Thyroid gland (tissue), 4 donors: ENCODE measurements at regions of chr1 and their contacts with region 1.

Region 1: DNA sequence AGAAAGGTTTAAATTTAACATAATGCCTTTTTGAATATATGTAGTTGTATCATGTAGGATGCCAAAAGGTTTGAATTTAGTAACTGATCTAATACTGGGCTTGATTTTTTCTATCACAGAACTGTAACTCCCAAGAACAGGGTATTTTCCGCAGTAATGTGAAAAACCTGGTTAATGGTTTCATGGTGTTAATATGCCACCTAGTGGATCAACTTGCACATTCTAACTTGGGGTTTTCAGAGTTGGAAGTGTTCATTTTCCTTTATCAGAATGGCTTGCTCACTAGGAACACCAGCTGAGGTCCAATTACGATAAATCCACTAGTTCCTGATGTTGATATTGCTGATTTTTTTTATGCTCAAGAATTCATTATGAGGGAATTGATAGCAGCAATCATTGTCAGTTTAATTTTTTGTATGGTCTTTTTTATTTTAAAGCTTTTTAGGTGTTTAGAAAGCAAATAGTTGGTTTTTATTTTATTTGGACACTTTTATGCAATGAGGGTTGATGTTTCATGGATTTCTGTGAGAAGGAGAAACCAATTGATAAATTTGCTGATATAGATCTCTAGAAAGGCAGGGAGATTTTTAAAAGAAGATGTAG is 157.2 kb downstream of the PLA2G4A start:
- DNase-seq: no peak
- H3K4me3 ChIP-seq: no peak overlapping the region
- H3K27ac ChIP-seq: no peak overlapping the region
- H3K4me1 ChIP-seq: no peaks in the 10 kb centered on the region
- H3K27me3 ChIP-seq: no peaks in the 10 kb centered on the region
- CTCF ChIP-seq: peak in 5 of 6 experiments; percentile 26 to 76 (median 61)
- POLR2A ChIP-seq: no peak

Region 2: GRCh38 chr1:186487163-186487562 is 498.8 kb before region 1 on chr1:
- intact Hi-C with region 1: loop called (anchors 5 kb)
- DNase-seq: no peak
- H3K4me3 ChIP-seq: no peak overlapping the region
- H3K27ac ChIP-seq: no peak overlapping the region
- H3K4me1 ChIP-seq: no peaks in the 10 kb centered on the region
- H3K27me3 ChIP-seq: no peaks in the 10 kb centered on the region
- CTCF ChIP-seq: no peak
- POLR2A ChIP-seq: no peak

Region 3: DNA sequence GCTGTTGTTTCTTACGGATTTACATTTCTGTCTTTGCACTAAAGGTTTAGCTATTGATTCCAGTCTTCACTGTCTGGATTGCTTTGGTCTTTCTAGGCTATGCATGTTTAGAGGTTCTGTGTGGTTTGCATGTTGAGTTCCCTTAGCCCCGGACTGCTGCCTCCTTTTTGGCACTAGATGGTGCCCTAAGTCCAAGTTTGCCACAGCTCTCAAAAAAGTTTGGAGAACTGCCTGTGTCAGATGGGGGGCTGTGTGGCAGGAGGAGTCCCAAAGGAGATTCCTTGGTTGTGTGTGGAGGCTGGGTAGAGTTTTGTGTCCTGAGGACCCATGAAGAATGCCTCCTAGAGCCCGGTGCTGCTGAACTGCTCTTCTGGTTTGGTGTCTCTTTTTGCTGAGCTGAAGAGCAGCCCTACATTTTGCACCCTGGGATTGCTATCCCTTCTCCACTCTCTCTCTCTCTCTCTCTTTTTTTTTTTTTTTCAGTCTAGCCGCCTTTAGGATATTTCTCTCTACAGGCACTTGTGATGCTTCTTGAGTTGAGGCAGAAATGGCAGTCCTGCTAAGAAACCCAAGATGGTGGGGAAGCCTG is 380.1 kb before region 1 on chr1:
- intact Hi-C with region 1: loop called (anchors 10 kb)
- DNase-seq: peak; percentile 4 to 10
- H3K4me3 ChIP-seq: no peak overlapping the region
- H3K27ac ChIP-seq: no peak overlapping the region
- H3K4me1 ChIP-seq: no peaks in the 10 kb centered on the region
- H3K27me3 ChIP-seq: no peaks in the 10 kb centered on the region
- CTCF ChIP-seq: peak in 3 of 6 experiments; percentile 51 to 53 (median 51)
- POLR2A ChIP-seq: no peak

Region 4: DNA sequence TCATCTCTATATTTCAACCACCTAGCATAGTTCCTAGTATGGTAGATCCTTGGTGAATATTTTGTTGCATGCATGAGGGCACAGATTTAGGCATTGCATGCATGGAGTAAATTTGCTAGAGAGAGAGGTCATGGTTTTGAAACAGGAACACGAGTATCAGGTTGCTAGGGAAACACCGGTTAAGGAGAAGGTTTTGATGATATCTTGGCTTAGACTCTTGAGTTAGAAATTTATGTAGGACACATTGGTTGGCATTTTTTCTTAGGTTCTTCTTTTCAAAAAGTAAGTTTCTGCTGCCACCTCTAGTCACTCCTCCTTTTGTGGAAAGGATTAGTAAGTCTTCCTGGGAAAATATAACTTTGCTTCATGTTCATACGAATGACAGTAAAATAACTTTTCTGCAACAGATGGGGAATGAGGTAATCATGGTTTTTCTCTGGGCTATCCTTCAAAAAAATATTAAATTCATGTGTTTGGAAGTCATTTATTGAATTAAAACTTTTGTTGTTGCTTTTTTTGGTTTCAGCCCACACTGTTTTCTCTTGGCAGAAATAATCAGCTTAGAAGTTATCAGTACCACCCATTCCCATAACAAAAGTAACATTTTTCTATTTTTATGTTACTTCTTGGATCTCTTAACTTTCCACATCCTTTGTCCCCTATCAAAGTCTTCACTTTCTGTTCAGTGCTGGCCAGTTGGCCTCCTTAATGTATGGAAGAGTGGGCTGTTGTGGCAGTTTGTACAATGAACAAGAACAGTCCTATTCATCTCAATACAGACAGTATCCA is 59.9 kb before region 1 on chr1:
- intact Hi-C with region 1: no loop called
- DNase-seq: no peak
- H3K4me3 ChIP-seq: no peak overlapping the region
- H3K27ac ChIP-seq: no peak overlapping the region
- H3K4me1 ChIP-seq: no peaks in the 10 kb centered on the region
- H3K27me3 ChIP-seq: no peaks in the 10 kb centered on the region
- CTCF ChIP-seq: no peak
- POLR2A ChIP-seq: no peak